ENCODE measurements at regions of chr11 and their contacts with region 1.

Region 1: GRCh38 chr11:119666463-119667131 is 62.4 kb downstream of the NECTIN1 start:
- DNase-seq: peak; percentile 61
- H3K4me3 ChIP-seq: no peak overlapping the region
- H3K27ac ChIP-seq: no peak overlapping the region
- H3K4me1 ChIP-seq: peaks cover 7% of the 10 kb centered on the region
- H3K27me3 ChIP-seq: no peaks in the 10 kb centered on the region
- CTCF ChIP-seq: peak; percentile 84 to 98 (median 96)
- POLR2A ChIP-seq: no peak

Region 2: GRCh38 chr11:119952441-119952840 is 285.8 kb after region 1 on chr11:
- intact Hi-C with region 1: no loop called
- DNase-seq: no peak
- H3K4me3 ChIP-seq: no peak overlapping the region
- H3K27ac ChIP-seq: no peak overlapping the region
- H3K4me1 ChIP-seq: no peaks in the 10 kb centered on the region
- H3K27me3 ChIP-seq: no peaks in the 10 kb centered on the region
- CTCF ChIP-seq: no peak
- POLR2A ChIP-seq: no peak

Region 3: DNA sequence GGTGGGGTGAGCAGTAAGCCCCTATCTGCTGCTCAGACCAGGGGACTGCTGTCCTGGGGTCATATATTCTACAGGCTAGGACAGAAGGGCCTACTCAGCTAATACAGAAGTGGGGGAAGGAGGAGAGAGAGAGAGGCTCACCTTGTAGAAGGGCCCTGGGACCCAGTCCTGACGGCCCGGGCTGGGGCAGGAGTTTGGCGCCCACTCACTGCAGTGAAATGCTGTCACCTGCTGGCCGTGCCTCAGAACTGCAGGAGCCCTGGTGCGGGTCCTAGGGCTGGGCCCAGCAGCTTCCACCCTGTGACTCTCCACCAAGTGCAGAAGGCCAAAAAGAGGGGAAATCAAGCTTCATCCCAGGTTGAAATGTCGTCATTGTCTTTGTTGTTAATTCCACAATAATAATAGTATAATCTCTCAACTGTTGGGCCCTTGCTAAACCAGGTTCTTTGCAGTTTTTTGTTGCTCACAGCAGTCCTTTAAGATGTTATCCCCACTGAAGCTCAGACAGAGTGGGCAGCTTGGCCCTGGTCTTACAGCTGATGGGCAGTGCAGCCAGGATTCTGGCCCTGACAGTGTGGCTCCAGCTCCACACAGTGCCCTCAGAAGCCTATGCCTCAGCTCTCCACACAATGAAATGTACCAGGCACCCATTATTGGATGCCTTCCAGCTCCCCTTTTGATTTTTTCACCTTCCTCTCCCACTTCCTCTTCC is 441.7 kb after region 1 on chr11:
- intact Hi-C with region 1: loop called (anchors 2 kb)
- DNase-seq: peak; percentile 67
- H3K4me3 ChIP-seq: no peak overlapping the region
- H3K27ac ChIP-seq: peak overlapping the region in 1 of 2 donors; percentile 2
- H3K4me1 ChIP-seq: no peaks in the 10 kb centered on the region
- H3K27me3 ChIP-seq: no peaks in the 10 kb centered on the region
- CTCF ChIP-seq: peak; percentile 92 to 99 (median 98)
- POLR2A ChIP-seq: no peak

Region 4: GRCh38 chr11:120172054-120172911 is 505.7 kb after region 1 on chr11:
- intact Hi-C with region 1: loop called (anchors 5 kb)
- DNase-seq: peak; percentile 67
- H3K4me3 ChIP-seq: no peak overlapping the region
- H3K27ac ChIP-seq: no peak overlapping the region
- H3K4me1 ChIP-seq: no peaks in the 10 kb centered on the region
- H3K27me3 ChIP-seq: no peaks in the 10 kb centered on the region
- CTCF ChIP-seq: peak; percentile 62 to 94 (median 92)
- POLR2A ChIP-seq: no peak

Region 5: DNA sequence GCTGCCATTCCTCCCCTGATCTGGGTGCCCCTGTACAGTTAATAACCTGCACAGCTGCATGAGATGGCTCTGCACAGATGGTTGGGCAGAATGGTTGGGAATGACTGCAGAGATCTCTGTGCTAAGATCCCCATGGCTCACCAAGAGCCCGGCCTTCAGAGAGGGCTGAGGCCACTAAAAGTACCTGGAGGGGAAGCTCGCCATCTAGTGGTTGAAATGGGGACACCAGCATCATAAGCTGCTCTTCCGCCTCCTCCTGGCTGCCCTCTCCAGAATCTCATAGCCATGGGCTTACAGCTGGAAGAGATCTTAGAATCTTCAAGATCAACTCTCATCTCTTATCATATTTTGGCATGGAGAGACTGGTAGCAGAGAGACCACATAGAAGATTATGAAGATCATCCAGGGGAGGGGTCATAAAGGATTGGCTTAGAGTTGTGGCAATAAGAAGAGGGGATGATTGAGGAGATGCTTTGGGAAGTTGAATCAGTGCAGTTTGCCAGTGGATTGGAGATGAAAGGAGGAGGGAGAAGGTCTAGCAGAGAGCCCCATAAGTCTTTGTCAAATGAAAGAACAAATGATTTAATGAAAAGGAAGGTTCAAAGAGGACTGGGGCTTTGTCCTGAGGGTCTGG is 636.5 kb after region 1 on chr11:
- intact Hi-C with region 1: loop called (anchors 10 kb)
- DNase-seq: peak; percentile 60
- H3K4me3 ChIP-seq: no peak overlapping the region
- H3K27ac ChIP-seq: peak overlapping the region; percentile 88 to 89
- H3K4me1 ChIP-seq: peaks cover 15% of the 10 kb centered on the region
- H3K27me3 ChIP-seq: no peaks in the 10 kb centered on the region
- CTCF ChIP-seq: peak; percentile 39 to 77 (median 72)
- POLR2A ChIP-seq: no peak